Spleen (tissue), 13 donors: ENCODE measurements at regions of chr13 and their contacts with region 1.

Region 1: GRCh38 chr13:20495082-20496023 is 30.3 kb downstream of the CRYL1 start:
- DNase-seq: no peak
- H3K4me3 ChIP-seq: peak overlapping the region in 2 of 8 donors; percentile 10 to 18
- H3K27ac ChIP-seq: peak overlapping the region in 1 of 8 donors; percentile 1
- H3K4me1 ChIP-seq: peaks cover 0 to 13% (median 10%) of the 10 kb centered on the region in 6 donors
- H3K27me3 ChIP-seq: no peaks in the 10 kb centered on the region
- CTCF ChIP-seq: peak; percentile 85 to 98 (median 95)
- POLR2A ChIP-seq: no peak

Region 2: DNA sequence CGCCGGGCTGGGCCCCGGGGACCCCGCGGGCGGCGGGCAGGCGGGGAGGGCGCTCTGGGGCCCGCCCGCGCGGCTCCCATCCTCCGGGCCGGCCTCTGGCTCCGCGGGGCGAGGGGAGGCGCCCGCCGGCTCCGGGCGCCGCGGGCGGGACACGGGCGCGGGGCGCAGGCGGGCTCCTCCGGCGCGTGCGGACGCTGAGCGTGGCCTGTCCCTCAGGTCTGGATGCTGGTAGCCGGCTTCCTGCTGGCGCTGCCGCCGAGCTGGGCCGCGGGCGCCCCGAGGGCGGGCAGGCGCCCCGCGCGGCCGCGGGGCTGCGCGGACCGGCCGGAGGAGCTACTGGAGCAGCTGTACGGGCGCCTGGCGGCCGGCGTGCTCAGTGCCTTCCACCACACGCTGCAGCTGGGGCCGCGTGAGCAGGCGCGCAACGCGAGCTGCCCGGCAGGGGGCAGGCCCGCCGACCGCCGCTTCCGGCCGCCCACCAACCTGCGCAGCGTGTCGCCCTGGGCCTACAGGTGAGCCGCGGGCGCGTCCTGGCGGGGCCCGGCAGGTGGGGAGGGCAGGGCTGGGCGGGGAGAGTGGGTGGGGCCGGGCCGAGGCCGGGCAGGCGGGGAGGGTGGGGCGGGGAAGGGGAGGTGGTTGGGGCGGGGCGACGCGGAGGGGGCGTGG is 208.6 kb after region 1 on chr13:
- intact Hi-C with region 1: loop called (anchors 10 kb)
- DNase-seq: peak; percentile 95
- H3K4me3 ChIP-seq: peak overlapping the region; percentile 20 to 84 (median 50)
- H3K27ac ChIP-seq: peak overlapping the region in 1 of 8 donors; percentile 51
- H3K4me1 ChIP-seq: peaks cover 0 to 26% (median 18%) of the 10 kb centered on the region in 6 donors
- H3K27me3 ChIP-seq: peaks cover 0 to 46% (median 32%) of the 10 kb centered on the region in 7 donors
- CTCF ChIP-seq: peak in 8 of 11 experiments; percentile 9 to 77 (median 65)
- POLR2A ChIP-seq: no peak

Region 3: GRCh38 chr13:20828539-20829364 is 333.4 kb after region 1 on chr13:
- intact Hi-C with region 1: loop called (anchors 5 kb)
- DNase-seq: no peak
- H3K4me3 ChIP-seq: peak overlapping the region in 2 of 8 donors; percentile 12 to 40
- H3K27ac ChIP-seq: peak overlapping the region in 4 of 8 donors; percentile 18 to 46 (median 33)
- H3K4me1 ChIP-seq: peaks cover 0 to 24% (median 10%) of the 10 kb centered on the region in 6 donors
- H3K27me3 ChIP-seq: no peaks in the 10 kb centered on the region
- CTCF ChIP-seq: peak; percentile 61 to 87 (median 80)
- POLR2A ChIP-seq: no peak

Region 4: DNA sequence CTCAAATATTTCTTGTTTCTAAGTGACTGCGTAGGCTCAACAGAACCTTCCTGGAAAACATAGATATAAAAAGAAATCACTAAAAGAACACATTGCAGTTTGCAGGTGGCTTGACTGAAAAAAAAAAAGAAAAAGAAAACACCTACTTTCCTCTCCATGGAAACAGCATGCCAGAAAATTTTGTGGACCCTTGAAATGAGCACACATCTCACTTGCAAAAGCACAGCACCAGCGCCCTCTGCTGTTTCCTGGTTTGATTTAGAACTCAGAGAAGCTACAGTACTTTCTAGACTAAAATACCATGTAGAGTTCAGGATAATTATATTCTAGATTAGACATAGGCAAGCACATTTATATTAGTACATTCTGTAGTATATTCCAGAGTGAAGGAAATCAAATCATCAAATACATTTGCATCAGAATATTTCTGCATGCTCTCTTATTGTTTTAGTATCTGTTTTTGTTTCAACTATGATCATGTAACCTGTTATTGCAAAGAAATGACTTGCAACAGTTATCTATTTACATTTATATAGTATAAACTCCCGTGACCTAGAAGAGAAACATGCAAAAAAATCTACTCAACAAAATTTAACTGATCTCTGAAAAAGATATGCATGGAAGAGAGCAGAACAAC is 429.5 kb after region 1 on chr13:
- intact Hi-C with region 1: loop called (anchors 5 kb)
- DNase-seq: peak; percentile 75
- H3K4me3 ChIP-seq: no peak overlapping the region
- H3K27ac ChIP-seq: no peak overlapping the region
- H3K4me1 ChIP-seq: no peaks in the 10 kb centered on the region
- H3K27me3 ChIP-seq: no peaks in the 10 kb centered on the region
- CTCF ChIP-seq: peak; percentile 32 to 72 (median 62)
- POLR2A ChIP-seq: no peak